ENCODE measurements at regions of chr18 and their contacts with region 1.

Region 1: GRCh38 chr18:48777026-48777743 is 173.6 kb downstream of the SMAD7 start:
- DNase-seq: peak; percentile 74
- H3K4me3 ChIP-seq: no peak overlapping the region
- H3K27ac ChIP-seq: peak overlapping the region in 2 of 4 donors; percentile 1 to 16
- H3K4me1 ChIP-seq: peaks cover 20 to 48% (median 33%) of the 10 kb centered on the region in 4 donors
- H3K27me3 ChIP-seq: no peaks in the 10 kb centered on the region
- CTCF ChIP-seq: peak; percentile 85 to 94 (median 91)
- EP300 ChIP-seq: no peak
- POLR2A ChIP-seq: no peak

Region 2: GRCh38 chr18:48913201-48913600 is 136.0 kb after region 1 on chr18:
- in situ Hi-C with region 1: loop called in 1 of 4 experiments (anchors 10 kb)
- intact Hi-C with region 1: no loop called
- DNase-seq: no peak
- H3K4me3 ChIP-seq: no peak overlapping the region
- H3K27ac ChIP-seq: no peak overlapping the region
- H3K4me1 ChIP-seq: peaks cover 0 to 8% (median 0%) of the 10 kb centered on the region in 4 donors
- H3K27me3 ChIP-seq: no peaks in the 10 kb centered on the region
- CTCF ChIP-seq: peak; percentile 20 to 46 (median 34)
- EP300 ChIP-seq: no peak
- POLR2A ChIP-seq: no peak

Region 3: DNA sequence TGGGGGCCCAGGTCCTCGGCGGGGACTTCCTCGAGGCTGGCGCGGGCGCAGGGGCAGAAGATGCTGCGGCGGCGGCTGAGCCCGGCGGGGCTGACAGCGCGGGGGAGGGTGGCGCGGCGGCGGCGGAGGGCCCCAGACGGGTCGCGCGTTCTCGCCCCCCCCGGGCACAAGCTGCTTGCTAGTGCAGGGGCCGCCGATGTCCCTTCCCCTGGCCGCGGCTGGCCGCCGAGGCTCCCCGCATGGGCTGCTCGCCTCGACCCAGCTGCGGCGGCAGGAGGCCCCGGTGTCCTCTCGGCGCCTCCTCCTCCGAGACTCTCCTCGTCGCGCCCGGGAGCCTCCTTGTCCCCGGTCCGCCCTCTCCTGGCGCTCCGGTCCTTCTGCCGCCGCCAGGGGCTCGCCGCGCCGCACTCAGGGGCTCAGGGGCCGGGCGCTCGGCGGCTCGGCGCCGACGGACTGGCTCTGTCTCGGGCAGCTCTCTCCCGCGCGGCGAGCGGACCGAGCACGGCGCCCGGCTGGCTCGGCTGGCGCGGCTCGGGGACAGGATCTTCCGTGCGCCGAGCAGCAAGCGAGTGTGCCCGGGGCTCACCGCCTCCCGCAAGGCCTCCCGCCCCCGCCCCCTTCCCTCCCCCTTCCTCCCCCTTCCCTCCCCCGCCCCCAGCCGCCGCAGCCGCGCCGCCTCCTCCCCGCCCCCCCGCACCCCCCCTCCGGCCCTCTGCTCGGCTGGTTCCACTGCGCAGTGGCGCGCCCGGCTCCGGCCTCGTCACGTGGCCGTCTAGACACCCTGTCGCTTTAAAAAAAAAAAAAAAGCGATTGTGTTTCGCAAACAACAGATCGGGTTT is 174.5 kb after region 1 on chr18:
- in situ Hi-C with region 1: loop called in 1 of 4 experiments (anchors 25 kb)
- intact Hi-C with region 1: loop called (anchors 10 kb)
- DNase-seq: peak; percentile 90
- H3K4me3 ChIP-seq: peak overlapping the region; percentile 71 to 92 (median 78)
- H3K27ac ChIP-seq: peak overlapping the region; percentile 98 to 100 (median 98)
- H3K4me1 ChIP-seq: peaks cover 16 to 46% (median 37%) of the 10 kb centered on the region in 4 donors
- H3K27me3 ChIP-seq: no peaks in the 10 kb centered on the region
- CTCF ChIP-seq: peak in 2 of 5 experiments; percentile 6 to 23
- EP300 ChIP-seq: no peak
- POLR2A ChIP-seq: peak; percentile 56

Region 4: DNA sequence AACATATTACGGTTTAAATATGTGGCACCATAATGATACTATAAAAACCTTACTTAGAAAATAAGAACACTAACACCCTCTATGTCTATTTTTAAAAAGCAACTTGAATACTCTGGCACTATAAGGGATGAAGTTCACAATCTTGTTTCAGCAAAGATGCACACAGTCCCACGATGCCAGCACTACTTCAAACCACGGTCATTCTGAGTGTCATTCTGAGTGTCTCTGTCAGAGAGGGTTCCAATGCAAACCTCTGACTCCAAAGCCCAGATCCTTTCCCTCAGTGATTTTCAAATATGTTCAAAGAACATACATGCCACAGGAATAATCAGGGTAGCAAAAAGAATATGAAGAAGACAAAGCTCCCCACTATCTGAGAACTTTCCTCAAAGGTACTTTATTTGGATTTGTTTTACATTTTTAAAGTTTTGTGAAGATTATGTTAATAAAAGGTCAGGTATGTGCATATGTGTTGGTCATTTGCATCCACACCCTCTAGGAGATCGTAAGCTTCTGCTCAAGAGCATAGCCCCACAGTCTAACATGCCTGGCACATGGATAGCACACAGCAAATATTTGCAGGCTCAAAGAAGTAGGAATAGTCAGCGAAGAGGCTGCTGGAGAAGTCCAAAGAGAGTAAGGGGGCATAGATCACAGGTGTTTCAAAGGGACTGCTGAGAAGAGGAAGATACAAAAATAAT is 555.7 kb after region 1 on chr18:
- in situ Hi-C with region 1: no loop called
- intact Hi-C with region 1: no loop called
- DNase-seq: no peak
- H3K4me3 ChIP-seq: no peak overlapping the region
- H3K27ac ChIP-seq: no peak overlapping the region
- H3K4me1 ChIP-seq: no peaks in the 10 kb centered on the region
- H3K27me3 ChIP-seq: no peaks in the 10 kb centered on the region
- CTCF ChIP-seq: no peak
- EP300 ChIP-seq: no peak
- POLR2A ChIP-seq: no peak